Activated naive CD4-positive, alpha-beta T cell treated with anti-CD3 and anti-CD28 coated beads, Interleukin-2, amount 10 ng/mL, durations not matched to agents 7 days and 5 days (primary cell): ENCODE measurements at regions of chr5 and their contacts with region 1.

Region 1: GRCh38 chr5:149442563-149443182 is 63.6 kb upstream of the IL17B start:
- DNase-seq: peak; percentile 78
- H3K4me3 Mint-ChIP-seq: no peak overlapping the region
- H3K27ac Mint-ChIP-seq: no peak overlapping the region
- H3K4me1 Mint-ChIP-seq: peaks cover 21% of the 10 kb centered on the region
- H3K27me3 Mint-ChIP-seq: peaks cover 12% of the 10 kb centered on the region

Region 2: DNA sequence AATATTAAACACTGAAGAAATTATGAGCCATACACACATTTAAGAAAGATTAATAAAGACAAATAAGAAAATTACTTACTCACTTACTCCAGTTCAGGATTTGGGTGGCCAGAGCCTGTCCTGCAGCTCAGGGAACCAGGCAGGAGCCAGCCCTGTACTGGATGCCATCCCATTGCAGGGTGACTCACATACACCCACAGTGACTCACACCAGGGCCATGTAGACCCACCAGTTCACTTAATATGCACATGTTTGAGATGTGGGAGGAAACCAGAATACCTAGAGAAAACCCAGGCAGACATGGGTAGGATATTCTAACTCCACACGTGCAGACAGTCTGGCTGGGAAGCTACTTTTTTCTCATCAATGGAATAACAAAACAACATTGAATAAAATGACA is 665.9 kb before region 1 on chr5:
- CTCF ChIA-PET with region 1: no interaction called
- DNase-seq: no peak
- H3K4me3 Mint-ChIP-seq: no peak overlapping the region
- H3K27ac Mint-ChIP-seq: no peak overlapping the region
- H3K4me1 Mint-ChIP-seq: no peaks in the 10 kb centered on the region
- H3K27me3 Mint-ChIP-seq: peaks cover 19% of the 10 kb centered on the region

Region 3: DNA sequence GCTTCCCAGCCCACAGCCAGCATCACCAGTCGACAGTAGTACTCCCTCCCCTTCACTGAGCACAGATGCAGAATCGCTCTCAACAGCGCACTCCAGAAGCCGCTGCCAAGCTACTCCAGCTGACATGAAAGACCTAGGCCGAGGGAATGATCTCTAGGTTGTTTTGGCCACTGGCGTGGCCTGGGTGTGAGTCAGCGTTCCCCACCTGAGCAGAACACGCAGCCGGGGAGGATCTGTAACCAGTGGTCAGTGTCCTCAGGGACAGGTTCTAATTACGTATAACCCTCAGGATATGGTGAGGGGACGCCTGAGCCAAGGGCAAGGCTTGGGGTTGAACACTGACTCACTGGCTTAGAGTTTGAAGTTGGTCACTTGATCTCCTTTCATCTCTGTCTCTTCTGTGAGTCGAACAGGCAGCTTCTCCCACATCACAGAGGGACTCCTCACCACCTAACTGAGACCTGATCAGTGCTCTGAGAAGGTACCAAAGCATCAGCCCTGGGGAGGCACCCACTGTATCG is 13.3 kb after region 1 on chr5:
- CTCF ChIA-PET with region 1: interaction called, 12 read pairs
- DNase-seq: no peak
- H3K4me3 Mint-ChIP-seq: no peak overlapping the region
- H3K27ac Mint-ChIP-seq: no peak overlapping the region
- H3K4me1 Mint-ChIP-seq: no peaks in the 10 kb centered on the region
- H3K27me3 Mint-ChIP-seq: peaks cover 24% of the 10 kb centered on the region

Region 4: GRCh38 chr5:149526845-149527580 is 84.3 kb after region 1 on chr5:
- CTCF ChIA-PET with region 1: no interaction called
- DNase-seq: no peak
- H3K4me3 Mint-ChIP-seq: no peak overlapping the region
- H3K27ac Mint-ChIP-seq: no peak overlapping the region
- H3K4me1 Mint-ChIP-seq: peaks cover 26% of the 10 kb centered on the region
- H3K27me3 Mint-ChIP-seq: no peaks in the 10 kb centered on the region

Region 5: DNA sequence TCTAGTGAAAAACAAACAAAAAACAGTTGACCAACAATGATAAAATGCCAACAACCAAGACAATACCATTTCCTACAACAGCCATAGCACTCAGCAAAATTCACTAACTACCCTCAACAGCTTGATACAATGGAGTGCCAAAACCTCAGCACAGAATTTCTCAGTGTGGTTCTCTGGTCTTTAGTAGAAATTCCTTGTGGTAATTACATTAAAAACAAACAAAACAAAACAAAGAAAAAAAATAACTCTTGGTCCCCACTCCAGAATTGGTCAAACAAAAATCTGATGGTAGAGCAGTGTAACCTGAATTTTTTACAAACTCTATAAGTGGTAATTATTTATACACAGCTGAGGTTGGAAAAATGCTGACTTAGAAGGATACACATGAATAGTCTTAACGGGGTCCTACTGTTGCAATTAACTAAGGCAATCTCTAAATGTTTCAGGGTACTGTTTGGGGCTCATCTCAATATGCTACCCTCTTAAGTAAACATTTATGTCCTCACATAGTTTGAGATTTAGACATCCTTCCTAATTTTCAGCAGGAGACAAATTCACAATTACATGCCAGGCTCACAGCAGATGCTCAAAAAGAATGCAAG is 94.8 kb after region 1 on chr5:
- CTCF ChIA-PET with region 1: no interaction called
- DNase-seq: no peak
- H3K4me3 Mint-ChIP-seq: no peak overlapping the region
- H3K27ac Mint-ChIP-seq: no peak overlapping the region
- H3K4me1 Mint-ChIP-seq: peaks cover 46% of the 10 kb centered on the region
- H3K27me3 Mint-ChIP-seq: no peaks in the 10 kb centered on the region

Region 6: GRCh38 chr5:149567226-149567625 is 124.6 kb after region 1 on chr5:
- CTCF ChIA-PET with region 1: interaction called, 41 read pairs
- DNase-seq: no peak
- H3K4me3 Mint-ChIP-seq: no peak overlapping the region
- H3K27ac Mint-ChIP-seq: no peak overlapping the region
- H3K4me1 Mint-ChIP-seq: peaks cover 17% of the 10 kb centered on the region
- H3K27me3 Mint-ChIP-seq: no peaks in the 10 kb centered on the region

Region 7: DNA sequence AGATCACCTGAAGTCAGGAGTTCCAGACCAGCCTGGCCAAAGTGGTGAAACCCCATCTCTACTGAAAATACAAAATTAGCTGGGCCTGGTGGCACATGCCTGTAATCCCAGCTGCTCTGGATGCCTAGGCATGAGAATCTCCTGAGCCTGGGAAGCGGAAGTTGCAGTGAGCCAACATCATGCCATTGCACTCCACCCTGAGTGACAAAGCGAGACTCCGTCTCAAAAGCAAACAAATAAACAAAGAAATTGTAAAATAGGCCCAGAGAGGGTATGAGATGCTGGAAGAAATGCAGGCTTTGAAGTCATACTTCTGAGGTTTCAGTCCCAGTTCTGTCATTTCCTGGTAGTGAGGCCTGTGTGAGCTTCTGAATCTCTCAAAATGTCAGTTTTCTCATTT is 133.3 kb after region 1 on chr5:
- CTCF ChIA-PET with region 1: interaction called, 11 read pairs
- DNase-seq: peak; percentile 34
- H3K4me3 Mint-ChIP-seq: no peak overlapping the region
- H3K27ac Mint-ChIP-seq: peak overlapping the region; percentile 93
- H3K4me1 Mint-ChIP-seq: peaks cover 28% of the 10 kb centered on the region
- H3K27me3 Mint-ChIP-seq: peaks cover 3% of the 10 kb centered on the region

Region 8: DNA sequence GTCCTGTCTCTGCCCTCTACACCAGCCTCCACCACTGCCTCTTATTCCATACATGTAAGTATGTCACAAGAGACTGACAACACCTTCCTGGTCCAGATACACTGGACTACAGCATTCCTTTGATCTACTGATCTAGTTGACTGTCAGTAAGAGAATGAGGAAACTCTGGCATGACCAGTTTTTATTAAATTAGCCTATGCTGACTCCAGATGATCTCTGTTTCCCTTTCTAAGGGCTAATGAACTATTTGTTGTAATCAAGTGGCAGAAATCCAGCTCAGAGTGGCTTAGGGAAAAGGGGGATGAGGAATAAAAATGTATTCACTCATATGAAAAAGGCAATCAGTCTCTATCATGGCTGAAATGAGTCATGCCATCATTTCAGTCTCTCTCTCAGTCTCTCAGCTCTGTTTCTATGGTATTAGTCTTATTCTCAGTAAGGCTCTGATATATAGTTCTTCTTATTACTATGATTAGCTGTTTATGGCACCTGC is 144.2 kb after region 1 on chr5:
- CTCF ChIA-PET with region 1: no interaction called
- DNase-seq: no peak
- H3K4me3 Mint-ChIP-seq: no peak overlapping the region
- H3K27ac Mint-ChIP-seq: no peak overlapping the region
- H3K4me1 Mint-ChIP-seq: no peaks in the 10 kb centered on the region
- H3K27me3 Mint-ChIP-seq: peaks cover 3% of the 10 kb centered on the region

Region 9: DNA sequence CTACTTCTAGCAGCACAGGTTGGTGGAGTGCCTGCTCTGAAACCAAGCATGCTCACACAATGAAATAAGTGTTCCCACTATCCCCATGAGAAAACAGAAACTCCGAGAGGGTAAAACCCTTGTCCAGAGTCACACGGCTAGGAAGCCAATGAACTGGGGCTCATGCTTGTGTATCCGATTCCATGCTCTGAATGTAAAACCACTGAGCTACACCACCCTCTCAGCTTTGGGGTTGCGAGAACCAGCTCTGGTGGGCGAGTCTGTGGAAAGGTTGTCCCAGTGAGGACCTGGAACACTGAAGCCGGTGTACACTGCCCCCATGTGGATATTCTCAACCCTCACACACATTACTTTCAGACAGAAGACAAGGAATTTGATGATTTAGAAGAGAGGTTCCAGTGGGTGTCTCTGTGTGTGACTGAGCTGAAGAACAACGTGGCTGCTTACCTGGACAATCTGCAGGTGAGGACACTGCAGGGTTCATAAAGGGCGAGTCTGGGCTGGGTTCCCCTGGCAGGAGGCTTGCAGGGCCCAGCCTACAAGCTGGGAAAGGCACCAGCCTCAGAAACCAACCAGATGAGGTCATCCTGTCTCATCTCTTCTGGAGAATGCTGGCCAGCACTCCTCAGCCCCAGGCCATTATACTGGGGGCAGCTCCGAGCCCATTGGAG is 176.0 kb after region 1 on chr5:
- CTCF ChIA-PET with region 1: interaction called, 41 read pairs
- DNase-seq: peak; percentile 48
- H3K4me3 Mint-ChIP-seq: no peak overlapping the region
- H3K27ac Mint-ChIP-seq: no peak overlapping the region
- H3K4me1 Mint-ChIP-seq: no peaks in the 10 kb centered on the region
- H3K27me3 Mint-ChIP-seq: peaks cover 4% of the 10 kb centered on the region